ENCODE measurements at regions of chr20 and their contacts with region 1.

Region 1: DNA sequence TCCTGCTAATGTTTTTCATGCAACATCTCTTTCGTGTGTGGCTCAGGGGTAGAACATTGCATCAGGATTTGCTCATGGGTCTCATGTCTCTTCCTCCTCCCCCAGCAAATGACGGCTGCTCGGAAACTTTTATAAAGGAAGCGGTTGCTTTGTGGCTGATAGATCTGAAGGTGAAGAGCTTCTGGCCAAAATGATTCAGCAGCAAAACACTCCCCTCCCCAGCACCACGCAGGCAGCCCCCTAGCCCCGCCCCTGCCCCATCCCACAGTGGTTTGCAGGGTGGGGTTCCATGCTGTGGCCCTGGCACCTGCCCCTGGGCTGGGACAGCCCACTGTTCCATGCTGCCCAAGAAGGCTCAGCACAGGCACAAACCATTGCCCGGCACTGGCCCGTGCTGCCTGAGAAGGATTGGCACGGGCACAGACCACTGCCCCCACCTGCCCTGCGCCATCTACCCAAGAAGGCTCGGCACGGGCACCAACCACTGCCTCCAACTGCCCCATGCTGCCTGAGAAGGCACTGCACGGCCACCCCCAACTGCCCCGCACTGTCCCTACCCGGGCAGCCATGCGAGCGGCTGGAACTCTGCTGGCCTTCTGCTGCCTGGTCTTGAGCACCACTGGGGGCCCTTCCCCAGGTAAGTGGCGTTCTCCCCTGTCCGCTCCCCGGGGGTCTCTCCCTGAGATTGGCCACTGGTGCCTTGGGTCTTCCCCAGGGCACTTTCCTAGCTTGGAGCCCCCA is at the start of gene CST7:
- DNase-seq: peak; percentile 94
- ATAC-seq: peak; percentile 95
- H3K4me3 Mint-ChIP-seq: peak within 1 kb of the TSS; percentile 83
- H3K27ac Mint-ChIP-seq: peak within 1 kb of the TSS; percentile 100
- H3K4me1 Mint-ChIP-seq: peaks cover 55% of the 10 kb centered on the region
- H3K27me3 Mint-ChIP-seq: no peaks in the 10 kb centered on the region
- CTCF ChIP-seq: no peak
- total RNA-seq, gene CST7: 48.5 to 49.3 TPM

Region 2: GRCh38 chr20:24934101-24934661 is 14.9 kb before region 1 on chr20:
- CTCF ChIA-PET with region 1: interaction called, 30 read pairs
- POLR2A ChIA-PET with region 1: interaction called, 3 read pairs
- intact Hi-C with region 1: no loop called
- DNase-seq: no peak
- ATAC-seq: no peak
- H3K4me3 Mint-ChIP-seq: no peak overlapping the region
- H3K27ac Mint-ChIP-seq: no peak overlapping the region
- H3K4me1 Mint-ChIP-seq: peaks cover 30% of the 10 kb centered on the region
- H3K27me3 Mint-ChIP-seq: no peaks in the 10 kb centered on the region
- CTCF ChIP-seq: no peak